ENCODE measurements at regions of chr21 and their contacts with region 1.

Region 1: GRCh38 chr21:37366482-37367316 is at the start of gene DYRK1A:
- DNase-seq: peak; percentile 95 to 100 (median 98)
- ATAC-seq: peak; percentile 83 to 86 (median 85)
- H3K4me3 ChIP-seq: peak within 1 kb of the TSS; percentile 77 to 78
- H3K4me3 Mint-ChIP-seq: peak within 1 kb of the TSS; percentile 97 to 100 (median 98)
- H3K27ac ChIP-seq: peak within 1 kb of the TSS; percentile 93
- H3K27ac Mint-ChIP-seq: peak within 1 kb of the TSS; percentile 99 to 100
- H3K4me1 ChIP-seq: peaks cover 13 to 34% of the 10 kb centered on the region in 2 experiments
- H3K4me1 Mint-ChIP-seq: peaks cover 42 to 49% (median 46%) of the 10 kb centered on the region in 3 donors
- H3K27me3 ChIP-seq: no peaks in the 10 kb centered on the region
- H3K27me3 Mint-ChIP-seq: no peaks in the 10 kb centered on the region
- total RNA-seq, gene DYRK1A: 113 to 149 (median 115) TPM

Region 2: GRCh38 chr21:37184784-37185593 is 181.7 kb before region 1 on chr21:
- CTCF ChIA-PET with region 1: interaction called in 1 of 2 experiments, 12 read pairs
- POLR2A ChIA-PET with region 1: interaction called in 1 of 2 experiments, 3 read pairs
- DNase-seq: no peak
- ATAC-seq: no peak
- H3K4me3 ChIP-seq: no peak overlapping the region
- H3K4me3 Mint-ChIP-seq: no peak overlapping the region
- H3K27ac ChIP-seq: no peak overlapping the region
- H3K27ac Mint-ChIP-seq: no peak overlapping the region
- H3K4me1 ChIP-seq: no peaks in the 10 kb centered on the region
- H3K4me1 Mint-ChIP-seq: no peaks in the 10 kb centered on the region
- H3K27me3 ChIP-seq: no peaks in the 10 kb centered on the region
- H3K27me3 Mint-ChIP-seq: no peaks in the 10 kb centered on the region

Region 3: GRCh38 chr21:37267269-37268184 is 99.2 kb before region 1 on chr21 and contains the start of gene VPS26C:
- CTCF ChIA-PET with region 1: interaction called in 1 of 2 experiments, 5 read pairs
- POLR2A ChIA-PET with region 1: interaction called, 3 to 10 read pairs
- DNase-seq: peak; percentile 94 to 99 (median 97)
- ATAC-seq: peak; percentile 87 to 90 (median 89)
- H3K4me3 ChIP-seq: peak within 1 kb of the TSS; percentile 65 to 83
- H3K4me3 Mint-ChIP-seq: peak within 1 kb of the TSS; percentile 91 to 98 (median 93)
- H3K27ac ChIP-seq: peak within 1 kb of the TSS; percentile 97
- H3K27ac Mint-ChIP-seq: peak within 1 kb of the TSS; percentile 94 to 95
- H3K4me1 ChIP-seq: peaks cover 10 to 22% of the 10 kb centered on the region in 2 experiments
- H3K4me1 Mint-ChIP-seq: peaks cover 38 to 45% (median 45%) of the 10 kb centered on the region in 3 donors
- H3K27me3 ChIP-seq: no peaks in the 10 kb centered on the region
- H3K27me3 Mint-ChIP-seq: no peaks in the 10 kb centered on the region
- total RNA-seq, gene VPS26C: 47.8 to 62.7 (median 57.5) TPM

Region 4: DNA sequence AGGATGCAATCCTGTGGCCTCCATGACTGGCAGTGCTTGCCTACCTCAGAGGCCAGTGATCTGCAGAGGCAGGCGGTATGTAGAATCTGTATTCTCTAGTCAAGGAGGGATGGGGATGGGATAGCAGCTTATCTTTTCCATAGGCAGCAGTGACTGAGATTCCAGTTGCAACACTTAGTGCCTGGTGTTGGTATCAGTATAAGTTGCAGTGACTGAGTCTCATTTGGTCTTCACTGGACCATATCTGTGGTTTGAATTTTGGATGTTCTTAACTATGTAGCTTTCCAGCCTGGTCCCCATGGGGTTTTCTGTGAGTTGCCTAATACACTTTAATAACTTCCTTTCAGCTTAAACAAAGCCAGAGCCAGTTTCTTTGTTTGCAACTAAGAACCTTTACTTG is 16.4 kb after region 1 on chr21:
- CTCF ChIA-PET with region 1: interaction called in 1 of 2 experiments, 9 read pairs
- POLR2A ChIA-PET with region 1: interaction called, 4 to 13 read pairs
- DNase-seq: no peak
- ATAC-seq: no peak
- H3K4me3 ChIP-seq: no peak overlapping the region
- H3K4me3 Mint-ChIP-seq: peak overlapping the region in 1 of 3 donors; percentile 37
- H3K27ac ChIP-seq: no peak overlapping the region
- H3K27ac Mint-ChIP-seq: no peak overlapping the region
- H3K4me1 ChIP-seq: peaks cover 46 to 48% of the 10 kb centered on the region in 2 experiments
- H3K4me1 Mint-ChIP-seq: peaks cover 88 to 93% (median 93%) of the 10 kb centered on the region in 3 donors
- H3K27me3 ChIP-seq: no peaks in the 10 kb centered on the region
- H3K27me3 Mint-ChIP-seq: no peaks in the 10 kb centered on the region

Measured in T-cell (primary cell).